Dendritic cell treated with granulocyte-macrophage colony-stimulating factor and Interleukin-4, amounts not matched to agents 40 ng/mL and 50 ng/mL, for 4 days (primary cell): ENCODE measurements at regions of chr21 and their contacts with region 1.

Region 1: GRCh38 chr21:20999659-21000058 is 1.4 kb downstream of the NCAM2 start:
- H3K4me3 Mint-ChIP-seq: no peak overlapping the region
- H3K27ac Mint-ChIP-seq: no peak overlapping the region
- H3K4me1 Mint-ChIP-seq: peaks cover 25% of the 10 kb centered on the region
- H3K27me3 Mint-ChIP-seq: peaks cover 34% of the 10 kb centered on the region

Region 2: GRCh38 chr21:20802631-20803260 is 196.9 kb before region 1 on chr21:
- intact Hi-C with region 1: no loop called
- H3K4me3 Mint-ChIP-seq: no peak overlapping the region
- H3K27ac Mint-ChIP-seq: no peak overlapping the region
- H3K4me1 Mint-ChIP-seq: no peaks in the 10 kb centered on the region
- H3K27me3 Mint-ChIP-seq: no peaks in the 10 kb centered on the region

Region 3: DNA sequence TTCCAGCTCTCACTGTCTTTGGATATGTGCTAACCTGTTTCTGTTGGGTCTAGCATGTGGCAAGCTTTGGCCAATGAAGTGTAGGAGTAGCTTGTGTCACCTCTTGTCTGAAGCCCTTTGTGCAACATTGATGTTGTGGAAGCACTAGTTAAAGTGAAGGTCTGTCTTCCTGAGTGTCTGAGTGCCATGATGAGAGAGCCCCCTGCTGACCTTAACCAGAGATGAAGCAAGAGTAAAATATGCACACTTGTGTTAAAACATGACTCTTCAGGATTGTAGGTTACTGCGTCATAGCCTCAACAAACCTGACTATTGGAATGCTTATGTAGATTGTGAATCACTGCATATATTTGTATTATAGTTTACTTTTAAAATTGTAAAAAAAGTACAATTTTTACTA is 102.3 kb after region 1 on chr21:
- intact Hi-C with region 1: loop called (anchors 1 kb)
- H3K4me3 Mint-ChIP-seq: no peak overlapping the region
- H3K27ac Mint-ChIP-seq: no peak overlapping the region
- H3K4me1 Mint-ChIP-seq: no peaks in the 10 kb centered on the region
- H3K27me3 Mint-ChIP-seq: no peaks in the 10 kb centered on the region

Region 4: DNA sequence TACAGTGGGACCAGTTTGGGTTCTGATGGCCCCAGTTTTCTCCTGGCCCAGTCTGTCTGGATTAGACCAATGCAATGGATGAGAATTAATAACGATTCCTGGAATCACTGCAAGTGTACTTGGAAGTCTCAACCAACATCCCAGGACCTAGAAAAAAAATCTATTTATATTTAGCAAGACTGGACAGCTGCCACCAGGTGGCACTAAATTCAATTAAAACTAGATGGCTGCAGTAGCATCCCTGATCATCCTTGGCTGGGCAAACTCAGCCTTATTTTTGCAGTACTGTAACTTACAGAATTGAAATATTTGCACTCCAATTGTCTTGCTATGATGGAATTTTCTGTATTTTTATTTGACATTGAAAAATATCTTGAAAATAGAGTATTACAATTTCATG is 164.2 kb after region 1 on chr21:
- intact Hi-C with region 1: loop called (anchors 2 kb)
- H3K4me3 Mint-ChIP-seq: no peak overlapping the region
- H3K27ac Mint-ChIP-seq: no peak overlapping the region
- H3K4me1 Mint-ChIP-seq: peaks cover 7% of the 10 kb centered on the region
- H3K27me3 Mint-ChIP-seq: no peaks in the 10 kb centered on the region

Region 5: DNA sequence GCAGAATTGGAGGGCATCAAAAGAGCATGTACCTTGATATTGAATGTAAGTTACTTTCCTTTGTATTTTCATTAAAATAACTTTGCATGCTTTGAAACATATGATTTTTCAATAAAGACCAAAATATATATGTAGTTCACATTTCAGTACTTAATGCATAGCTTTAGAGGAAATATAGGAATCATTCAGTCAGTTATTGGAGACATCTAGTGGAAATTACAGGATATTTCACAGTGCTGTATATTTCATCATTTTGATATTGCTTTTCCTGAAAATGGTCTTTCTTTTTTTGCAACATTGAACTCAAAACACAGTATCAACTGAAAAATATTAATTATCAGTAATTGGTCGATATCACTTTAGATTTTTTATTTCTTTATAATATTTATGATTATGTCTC is 374.3 kb after region 1 on chr21:
- intact Hi-C with region 1: loop called (anchors 5 kb)
- H3K4me3 Mint-ChIP-seq: no peak overlapping the region
- H3K27ac Mint-ChIP-seq: no peak overlapping the region
- H3K4me1 Mint-ChIP-seq: no peaks in the 10 kb centered on the region
- H3K27me3 Mint-ChIP-seq: no peaks in the 10 kb centered on the region

Region 6: DNA sequence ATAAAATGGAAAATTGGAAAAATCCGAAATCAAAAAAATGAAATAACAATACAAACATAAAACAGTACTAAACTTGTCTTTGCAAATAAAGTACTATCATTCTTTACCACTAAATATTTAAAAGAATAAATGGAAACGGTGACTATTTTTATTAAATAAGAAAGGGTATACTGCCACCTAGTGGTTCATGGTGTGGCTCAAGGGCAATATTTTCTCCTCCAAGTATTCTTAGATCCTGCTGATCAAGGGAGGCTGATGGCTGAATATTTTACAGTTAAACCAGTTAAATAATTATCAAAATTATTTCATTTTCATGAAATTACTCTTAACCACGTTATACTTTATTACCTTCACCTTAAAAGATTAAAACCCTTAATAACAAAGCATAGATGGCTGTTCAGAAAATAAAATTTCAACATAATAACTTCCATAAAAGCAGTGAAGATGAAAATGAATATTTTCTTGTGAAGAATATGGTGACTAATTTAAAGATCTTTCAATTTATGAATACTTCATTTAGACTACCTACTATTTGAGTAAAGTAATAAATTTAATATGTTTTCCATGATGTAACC is 1792.4 kb after region 1 on chr21:
- intact Hi-C with region 1: loop called (anchors 2 kb)
- H3K4me3 Mint-ChIP-seq: no peak overlapping the region
- H3K27ac Mint-ChIP-seq: no peak overlapping the region
- H3K4me1 Mint-ChIP-seq: no peaks in the 10 kb centered on the region
- H3K27me3 Mint-ChIP-seq: no peaks in the 10 kb centered on the region